ENCODE measurements at regions of chr12 and their contacts with region 1.

Region 1: DNA sequence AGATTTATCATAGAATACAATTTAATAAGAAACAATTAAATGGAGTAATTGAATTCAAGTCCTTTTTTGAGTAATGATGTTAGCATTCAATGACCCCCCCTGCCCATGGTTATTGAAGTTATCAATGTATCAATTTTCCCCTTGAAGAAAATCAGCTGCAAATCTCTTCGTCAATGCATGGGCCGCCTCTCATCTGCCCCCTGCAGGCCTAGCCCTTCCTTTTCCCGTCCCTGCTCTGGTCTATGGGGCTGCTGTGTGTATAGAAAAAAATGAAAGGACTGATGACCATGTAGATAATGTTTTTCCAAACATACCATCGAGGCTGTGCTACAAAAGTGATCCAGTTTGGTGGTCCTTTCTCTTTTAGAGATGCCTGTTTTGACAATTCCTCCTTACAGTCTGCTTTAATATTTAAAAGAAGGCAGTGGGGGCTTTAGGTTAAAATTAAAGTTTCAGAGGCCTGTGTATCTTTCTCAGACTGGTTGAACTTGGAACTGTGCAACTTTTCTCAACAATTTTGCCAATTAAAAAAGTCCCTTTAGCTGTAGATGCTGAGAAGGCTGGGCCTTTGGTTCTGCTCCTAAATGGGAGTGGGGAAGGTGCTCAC is 98.4 kb downstream of the APAF1 start:
- DNase-seq: peak; percentile 44
- CTCF ChIP-seq: peak; percentile 52

Region 2: GRCh38 chr12:98725476-98726247 is 17.8 kb before region 1 on chr12:
- CTCF ChIA-PET with region 1: interaction called, 31 read pairs
- POLR2A ChIA-PET with region 1: no interaction called
- DNase-seq: peak; percentile 48
- CTCF ChIP-seq: peak; percentile 65

Region 3: DNA sequence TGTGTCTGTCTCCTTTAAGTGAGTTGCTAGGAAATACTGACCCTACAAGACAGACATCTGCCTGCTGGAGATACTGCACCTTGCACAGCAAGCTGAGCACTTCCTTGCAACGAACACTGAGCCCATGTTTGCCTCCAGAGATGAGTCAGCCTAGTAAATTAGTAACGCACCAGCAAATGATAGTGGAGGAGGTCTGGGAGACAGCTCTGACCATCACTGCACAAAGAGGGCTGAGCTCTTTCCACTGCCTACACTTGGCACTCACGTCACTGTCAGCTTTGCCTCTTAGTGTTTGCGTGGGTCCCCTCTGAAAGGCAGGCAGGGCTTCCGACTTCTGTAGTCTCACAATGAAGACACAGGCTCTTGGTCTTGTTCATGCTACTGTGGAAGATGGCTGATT is 10.6 kb after region 1 on chr12:
- CTCF ChIA-PET with region 1: interaction called, 33 read pairs
- POLR2A ChIA-PET with region 1: no interaction called
- DNase-seq: peak; percentile 86
- CTCF ChIP-seq: no peak